ENCODE measurements at regions of chrX and their contacts with region 1.

Region 1: GRCh38 chrX:154136627-154137161 is 7.3 kb upstream of the OPN1LW start:
- DNase-seq: peak; percentile 84
- ATAC-seq: peak; percentile 86
- H3K4me3 ChIP-seq: peak overlapping the region in 4 of 5 experiments; percentile 31 to 50 (median 40)
- H3K4me3 Mint-ChIP-seq: peak overlapping the region; percentile 75
- H3K27ac ChIP-seq: peak overlapping the region; percentile 51 to 64
- H3K27ac Mint-ChIP-seq: peak overlapping the region; percentile 87
- H3K4me1 ChIP-seq: peaks cover 10 to 22% of the 10 kb centered on the region in 2 donors
- H3K4me1 Mint-ChIP-seq: peaks cover 13% of the 10 kb centered on the region
- H3K27me3 ChIP-seq: no peaks in the 10 kb centered on the region
- H3K27me3 Mint-ChIP-seq: no peaks in the 10 kb centered on the region
- CTCF ChIP-seq: peak; percentile 80

Region 2: GRCh38 chrX:154298312-154298711 is 161.6 kb after region 1 on chrX:
- CTCF ChIA-PET with region 1: interaction called, 12 read pairs
- POLR2A ChIA-PET with region 1: no interaction called
- intact Hi-C with region 1: no loop called
- DNase-seq: peak; percentile 73
- ATAC-seq: peak; percentile 87
- H3K4me3 ChIP-seq: no peak overlapping the region
- H3K4me3 Mint-ChIP-seq: peak overlapping the region; percentile 19
- H3K27ac ChIP-seq: peak overlapping the region; percentile 47 to 67
- H3K27ac Mint-ChIP-seq: peak overlapping the region; percentile 82
- H3K4me1 ChIP-seq: peaks cover 9 to 15% of the 10 kb centered on the region in 2 donors
- H3K4me1 Mint-ChIP-seq: peaks cover 19% of the 10 kb centered on the region
- H3K27me3 ChIP-seq: no peaks in the 10 kb centered on the region
- H3K27me3 Mint-ChIP-seq: no peaks in the 10 kb centered on the region
- CTCF ChIP-seq: no peak

Region 3: GRCh38 chrX:154308108-154308946 is 171.6 kb after region 1 on chrX:
- CTCF ChIA-PET with region 1: interaction called, 63 read pairs
- POLR2A ChIA-PET with region 1: interaction called, 3 read pairs
- intact Hi-C with region 1: no loop called
- DNase-seq: peak; percentile 84
- ATAC-seq: peak; percentile 78
- H3K4me3 ChIP-seq: no peak overlapping the region
- H3K4me3 Mint-ChIP-seq: peak overlapping the region; percentile 39
- H3K27ac ChIP-seq: no peak overlapping the region
- H3K27ac Mint-ChIP-seq: peak overlapping the region; percentile 63
- H3K4me1 ChIP-seq: peaks cover 34 to 43% of the 10 kb centered on the region in 2 donors
- H3K4me1 Mint-ChIP-seq: peaks cover 42% of the 10 kb centered on the region
- H3K27me3 ChIP-seq: no peaks in the 10 kb centered on the region
- H3K27me3 Mint-ChIP-seq: no peaks in the 10 kb centered on the region
- CTCF ChIP-seq: peak; percentile 67

Measured in B cell (primary cell).